ENCODE measurements at regions of chr15 and their contacts with region 1.

Region 1: DNA sequence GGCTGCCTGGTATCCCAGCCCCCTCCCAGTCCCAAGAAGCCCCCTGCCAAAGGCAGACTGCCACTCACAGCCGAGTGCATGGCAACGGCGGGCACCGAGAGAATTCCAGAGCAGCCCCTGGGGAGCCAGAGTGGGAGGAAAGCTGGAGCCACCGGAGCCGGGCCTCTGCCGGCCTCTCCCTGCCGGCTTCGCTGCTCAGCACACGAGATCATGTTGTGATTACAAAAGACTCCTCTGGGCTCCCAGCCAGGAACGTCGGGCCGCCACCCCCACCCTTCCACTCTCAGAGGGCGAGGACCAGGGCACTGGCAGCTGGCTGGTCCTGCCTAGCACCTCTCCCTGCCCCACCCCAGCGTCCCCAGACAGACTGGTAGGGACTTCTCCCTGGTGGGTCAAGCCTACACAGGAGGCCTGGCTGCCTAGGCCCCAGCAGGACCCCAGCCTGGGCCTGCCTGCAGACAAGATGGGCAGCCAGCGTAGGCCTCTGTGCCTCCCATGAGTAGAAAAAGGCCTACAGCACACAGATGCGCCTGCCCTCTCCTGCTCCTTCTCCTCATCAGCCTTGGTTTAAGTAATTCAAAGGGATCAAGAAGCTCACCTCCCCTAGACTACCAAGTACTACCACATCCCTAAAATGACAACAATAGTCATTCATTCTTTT is at the start of gene CCDC9B:
- DNase-seq: peak; percentile 95
- total RNA-seq, gene CCDC9B: 178 TPM

Region 2: DNA sequence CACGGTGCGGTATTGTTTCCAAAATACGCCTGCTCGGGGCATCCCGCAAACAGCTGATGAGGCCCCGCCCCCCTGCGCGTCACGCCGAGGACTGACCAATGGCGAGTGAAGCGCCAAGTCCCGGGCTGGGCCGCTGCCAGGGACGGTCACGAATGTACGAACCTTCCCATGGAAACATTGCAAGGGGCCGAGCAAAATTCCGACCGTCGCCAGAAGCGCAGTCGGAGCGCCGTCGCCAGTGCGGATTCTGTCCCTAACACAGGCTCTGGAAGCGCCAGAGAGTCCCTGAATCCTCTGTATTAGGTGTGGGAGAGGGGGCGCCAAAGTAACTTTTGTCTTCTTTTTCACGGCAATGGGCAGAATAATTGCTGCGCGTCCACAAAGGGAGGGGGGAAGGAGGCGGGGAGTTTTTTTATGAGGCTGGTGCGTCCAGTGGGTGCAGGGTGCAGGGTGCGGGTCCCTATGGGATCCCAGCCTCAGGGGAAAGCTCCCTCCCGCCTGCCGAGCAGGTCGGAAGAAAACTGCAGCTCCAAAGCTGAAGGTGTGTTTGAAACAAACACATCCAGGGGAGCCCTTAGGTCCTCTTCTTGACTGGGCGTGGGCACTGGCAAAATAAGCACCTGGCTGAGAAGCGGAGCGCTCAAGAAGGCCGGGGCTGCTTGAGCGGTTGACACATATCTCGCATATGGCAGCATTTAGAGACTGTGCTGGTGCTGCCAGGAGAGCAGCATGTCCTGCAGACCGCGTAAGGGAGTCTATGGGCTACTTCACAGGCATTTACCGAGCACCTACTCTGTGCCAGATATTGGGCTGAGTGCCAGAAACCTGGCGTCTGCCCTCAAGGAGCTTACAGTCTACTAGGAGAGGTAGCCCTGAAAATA is 231.8 kb before region 1 on chr15 and contains the start of gene BMF:
- intact Hi-C with region 1: no loop called
- DNase-seq: peak; percentile 100
- total RNA-seq, gene BMF: 1.1 TPM

Region 3: GRCh38 chr15:40274350-40275274 is 66.3 kb before region 1 on chr15:
- intact Hi-C with region 1: no loop called
- DNase-seq: peak; percentile 91

Region 4: GRCh38 chr15:40301467-40302179 is 39.2 kb before region 1 on chr15:
- intact Hi-C with region 1: no loop called
- DNase-seq: no peak

Region 5: GRCh38 chr15:40323239-40323952 is 17.5 kb before region 1 on chr15 and contains the start of gene INAFM2:
- intact Hi-C with region 1: loop called (anchors 1 kb)
- DNase-seq: peak; percentile 94
- total RNA-seq, gene INAFM2: 40.0 TPM

Region 6: DNA sequence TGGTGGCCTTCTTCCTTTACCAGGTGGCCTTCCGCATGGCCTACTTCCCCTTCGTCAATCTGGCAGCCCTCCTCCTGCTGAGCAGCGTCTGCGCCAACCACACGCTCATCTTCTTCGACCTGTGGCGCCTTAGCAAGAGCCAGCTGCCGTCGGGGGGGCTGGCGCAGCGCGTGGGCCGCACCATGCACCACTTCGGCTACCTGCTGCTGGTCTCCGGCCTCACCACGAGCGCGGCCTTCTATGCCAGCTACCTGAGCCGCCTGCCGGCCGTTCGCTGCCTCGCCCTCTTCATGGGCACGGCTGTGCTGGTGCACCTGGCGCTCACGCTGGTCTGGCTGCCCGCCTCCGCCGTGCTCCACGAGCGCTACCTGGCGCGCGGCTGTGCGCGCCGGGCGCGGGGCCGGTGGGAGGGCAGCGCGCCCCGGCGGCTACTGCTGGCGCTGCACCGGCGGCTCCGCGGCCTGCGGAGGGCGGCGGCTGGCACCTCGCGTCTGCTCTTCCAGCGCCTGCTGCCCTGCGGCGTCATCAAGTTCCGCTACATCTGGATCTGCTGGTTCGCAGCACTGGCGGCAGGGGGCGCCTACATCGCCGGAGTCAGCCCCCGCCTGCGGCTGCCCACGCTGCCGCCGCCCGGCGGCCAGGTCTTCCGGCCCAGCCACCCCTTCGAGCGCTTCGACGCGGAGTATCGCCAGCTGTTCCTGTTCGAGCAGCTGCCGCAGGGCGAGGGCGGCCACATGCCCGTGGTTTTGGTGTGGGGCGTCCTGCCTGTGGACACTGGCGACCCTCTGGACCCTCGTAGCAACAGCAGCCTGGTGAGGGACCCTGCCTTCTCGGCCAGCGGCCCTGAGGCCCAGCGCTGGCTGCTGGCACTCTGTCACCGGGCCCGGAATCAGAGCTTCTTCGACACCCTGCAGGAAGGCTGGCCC is 27.1 kb after region 1 on chr15:
- intact Hi-C with region 1: loop called (anchors 2 kb)
- DNase-seq: peak; percentile 94

Measured in cardiac septum (tissue), 1 donor.